Naive thymus-derived CD4-positive, alpha-beta T cell (primary cell): ENCODE measurements at regions of chr11 and their contacts with region 1.

Region 1: DNA sequence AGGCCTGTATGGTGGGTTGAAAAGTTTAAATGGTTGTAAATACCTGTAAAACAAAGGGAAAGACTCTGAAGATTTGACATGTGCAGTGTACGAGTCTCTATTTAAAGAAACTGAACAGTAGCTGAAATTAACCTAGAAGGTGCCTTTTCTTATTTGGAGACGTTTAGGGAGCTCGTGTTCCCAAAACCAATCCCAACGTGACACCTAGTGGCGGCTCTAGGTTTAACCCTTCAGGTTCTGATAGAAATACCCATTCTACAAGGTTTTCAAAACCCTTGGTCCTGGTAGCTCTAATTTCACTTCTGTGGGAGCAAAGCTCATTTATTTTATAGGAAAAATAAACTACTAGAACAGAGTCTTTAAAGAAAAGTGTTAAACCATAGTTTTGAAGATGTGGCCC is 258.3 kb downstream of the LRRC4C start:
- DNase-seq: no peak
- ATAC-seq: no peak
- H3K4me3 ChIP-seq: no peak overlapping the region
- H3K4me3 Mint-ChIP-seq: no peak overlapping the region
- H3K27ac ChIP-seq: no peak overlapping the region
- H3K27ac Mint-ChIP-seq: no peak overlapping the region
- H3K4me1 ChIP-seq: no peaks in the 10 kb centered on the region
- H3K4me1 Mint-ChIP-seq: no peaks in the 10 kb centered on the region
- H3K27me3 ChIP-seq: no peaks in the 10 kb centered on the region
- H3K27me3 Mint-ChIP-seq: no peaks in the 10 kb centered on the region

Region 2: DNA sequence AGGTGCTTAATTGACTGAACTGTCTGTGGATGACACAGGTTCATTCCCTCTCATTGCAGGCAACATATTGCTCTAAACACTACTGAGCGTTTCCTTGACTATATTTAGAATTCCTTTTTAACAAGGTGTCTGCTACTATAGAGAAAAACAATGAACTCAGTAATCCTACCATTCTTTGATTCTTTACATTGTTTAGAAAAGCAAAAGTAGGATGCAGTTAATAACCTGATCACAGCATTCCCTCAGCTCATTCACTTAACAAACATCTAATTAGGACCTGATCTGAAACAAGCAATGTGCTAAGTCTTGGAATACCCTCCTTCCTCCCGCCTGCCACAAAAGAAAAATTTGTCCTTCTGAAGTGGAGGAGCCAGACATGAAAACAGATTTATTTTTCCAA is 54.8 kb before region 1 on chr11:
- CTCF ChIA-PET with region 1: no interaction called
- POLR2A ChIA-PET with region 1: no interaction called
- intact Hi-C with region 1: loop called in 1 of 2 experiments (anchors 10 kb)
- DNase-seq: no peak
- ATAC-seq: no peak
- H3K4me3 ChIP-seq: no peak overlapping the region
- H3K4me3 Mint-ChIP-seq: no peak overlapping the region
- H3K27ac ChIP-seq: no peak overlapping the region
- H3K27ac Mint-ChIP-seq: no peak overlapping the region
- H3K4me1 ChIP-seq: no peaks in the 10 kb centered on the region
- H3K4me1 Mint-ChIP-seq: no peaks in the 10 kb centered on the region
- H3K27me3 ChIP-seq: no peaks in the 10 kb centered on the region
- H3K27me3 Mint-ChIP-seq: no peaks in the 10 kb centered on the region

Region 3: GRCh38 chr11:41222236-41222635 is 21.1 kb after region 1 on chr11:
- CTCF ChIA-PET with region 1: no interaction called
- POLR2A ChIA-PET with region 1: no interaction called
- intact Hi-C with region 1: no loop called
- DNase-seq: no peak
- ATAC-seq: no peak
- H3K4me3 ChIP-seq: no peak overlapping the region
- H3K4me3 Mint-ChIP-seq: no peak overlapping the region
- H3K27ac ChIP-seq: no peak overlapping the region
- H3K27ac Mint-ChIP-seq: no peak overlapping the region
- H3K4me1 ChIP-seq: no peaks in the 10 kb centered on the region
- H3K4me1 Mint-ChIP-seq: no peaks in the 10 kb centered on the region
- H3K27me3 ChIP-seq: no peaks in the 10 kb centered on the region
- H3K27me3 Mint-ChIP-seq: no peaks in the 10 kb centered on the region

Region 4: GRCh38 chr11:41273908-41274307 is 72.8 kb after region 1 on chr11:
- CTCF ChIA-PET with region 1: no interaction called
- POLR2A ChIA-PET with region 1: no interaction called
- intact Hi-C with region 1: no loop called
- DNase-seq: no peak
- ATAC-seq: no peak
- H3K4me3 ChIP-seq: no peak overlapping the region
- H3K4me3 Mint-ChIP-seq: no peak overlapping the region
- H3K27ac ChIP-seq: no peak overlapping the region
- H3K27ac Mint-ChIP-seq: no peak overlapping the region
- H3K4me1 ChIP-seq: no peaks in the 10 kb centered on the region
- H3K4me1 Mint-ChIP-seq: no peaks in the 10 kb centered on the region
- H3K27me3 ChIP-seq: no peaks in the 10 kb centered on the region
- H3K27me3 Mint-ChIP-seq: no peaks in the 10 kb centered on the region